WTC11 (cell line): ENCODE measurements at regions of chr4 and their contacts with region 1.

Region 1: GRCh38 chr4:120858776-120859175 is 63.8 kb downstream of the PRDM5 start:
- DNase-seq: no peak
- ATAC-seq: no peak
- H3K4me3 Mint-ChIP-seq: no peak overlapping the region
- H3K27ac Mint-ChIP-seq: no peak overlapping the region
- H3K4me1 Mint-ChIP-seq: peaks cover 40% of the 10 kb centered on the region
- H3K27me3 Mint-ChIP-seq: no peaks in the 10 kb centered on the region
- CTCF ChIP-seq: no peak

Region 2: DNA sequence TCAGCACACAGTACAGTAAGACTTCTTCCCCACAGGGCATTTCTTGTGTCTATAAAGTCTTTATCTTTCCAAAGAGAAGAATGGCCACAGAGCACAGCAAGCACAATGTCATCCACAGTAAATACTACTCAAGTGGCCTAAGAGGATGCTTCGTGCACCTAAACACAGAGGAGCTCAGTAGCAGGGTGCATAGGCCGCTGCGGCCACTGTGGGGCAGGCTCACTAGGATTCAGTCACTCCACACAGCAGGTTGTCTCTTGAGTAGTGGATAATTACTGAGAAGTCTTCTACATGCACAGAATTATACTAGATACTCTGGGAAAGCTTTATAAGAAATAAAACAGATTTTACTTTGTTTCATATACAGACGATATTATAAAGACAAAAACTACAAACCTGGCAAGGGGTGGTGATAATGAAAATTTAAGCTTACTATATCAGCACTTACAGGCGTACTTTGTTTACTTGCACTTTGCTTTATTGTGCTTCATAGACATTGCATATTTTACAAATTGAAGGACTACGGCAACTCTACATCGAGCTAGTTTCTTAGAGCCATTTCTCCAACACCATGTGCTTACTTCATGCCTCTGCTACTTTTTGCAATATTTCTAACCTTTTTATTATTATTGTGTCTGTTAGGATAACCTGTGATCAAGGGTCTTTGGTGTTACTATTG is 14.8 kb before region 1 on chr4:
- CTCF ChIA-PET with region 1: interaction called, 14 read pairs
- POLR2A ChIA-PET with region 1: interaction called, 3 read pairs
- DNase-seq: peak; percentile 60
- ATAC-seq: peak; percentile 95
- H3K4me3 Mint-ChIP-seq: no peak overlapping the region
- H3K27ac Mint-ChIP-seq: no peak overlapping the region
- H3K4me1 Mint-ChIP-seq: peaks cover 8% of the 10 kb centered on the region
- H3K27me3 Mint-ChIP-seq: no peaks in the 10 kb centered on the region
- CTCF ChIP-seq: peak; percentile 30; the same call in 1 of the 2 replicates

Region 3: DNA sequence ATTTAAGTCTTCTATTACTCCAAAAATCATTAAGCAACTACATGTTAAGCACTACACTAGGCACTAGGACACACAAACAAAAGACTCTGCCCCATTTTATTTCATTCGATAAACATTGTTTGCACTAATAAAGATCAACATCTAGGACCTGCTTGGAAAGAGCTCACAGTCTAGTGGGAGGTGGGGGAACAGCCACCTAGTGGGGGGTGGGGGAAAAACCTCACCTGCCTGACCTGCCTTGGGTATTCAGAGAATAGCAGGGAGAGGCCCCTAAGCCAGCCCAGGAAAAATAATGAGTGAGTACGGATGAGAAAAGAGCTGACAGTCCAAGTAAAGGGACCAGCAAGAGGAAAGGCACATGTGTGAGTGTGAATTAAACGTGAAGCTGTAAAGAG is 11.5 kb after region 1 on chr4:
- CTCF ChIA-PET with region 1: interaction called, 13 read pairs
- POLR2A ChIA-PET with region 1: no interaction called
- DNase-seq: peak; percentile 61
- ATAC-seq: peak; percentile 82
- H3K4me3 Mint-ChIP-seq: no peak overlapping the region
- H3K27ac Mint-ChIP-seq: peak overlapping the region; percentile 60
- H3K4me1 Mint-ChIP-seq: peaks cover 40% of the 10 kb centered on the region
- H3K27me3 Mint-ChIP-seq: no peaks in the 10 kb centered on the region
- CTCF ChIP-seq: 0 out of 2 replicates have a peak, but pooled peaks have one; percentile 17

Region 4: DNA sequence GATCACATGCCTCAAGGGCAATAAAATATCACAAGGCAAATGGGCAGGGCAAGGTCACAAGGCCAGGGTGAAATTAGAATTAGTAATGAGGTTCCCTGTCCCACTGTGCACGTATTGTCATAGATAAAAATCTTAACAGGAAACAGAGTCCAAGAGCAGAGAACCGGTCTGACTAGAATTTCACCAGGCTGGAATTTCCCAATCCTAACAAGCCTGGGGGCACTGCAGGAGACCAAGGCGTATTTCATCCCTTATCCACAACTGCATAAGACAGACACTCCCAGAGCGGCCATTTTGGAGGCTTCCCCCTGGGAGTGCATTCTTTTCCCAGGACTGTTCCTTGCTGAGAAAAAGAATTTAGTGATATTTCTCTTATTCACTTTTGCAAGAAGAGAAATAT is 89.6 kb after region 1 on chr4:
- CTCF ChIA-PET with region 1: no interaction called
- POLR2A ChIA-PET with region 1: no interaction called
- DNase-seq: no peak
- ATAC-seq: no peak
- H3K4me3 Mint-ChIP-seq: no peak overlapping the region
- H3K27ac Mint-ChIP-seq: no peak overlapping the region
- H3K4me1 Mint-ChIP-seq: no peaks in the 10 kb centered on the region
- H3K27me3 Mint-ChIP-seq: peaks cover 13% of the 10 kb centered on the region
- CTCF ChIP-seq: no peak